WTC11 (cell line): ENCODE measurements at regions of chr2 and their contacts with region 1.

Region 1: GRCh38 chr2:84022810-84023431 is 436.2 kb downstream of the SUCLG1 start:
- DNase-seq: peak; percentile 22
- ATAC-seq: peak; percentile 77
- H3K4me3 Mint-ChIP-seq: no peak overlapping the region
- H3K27ac Mint-ChIP-seq: no peak overlapping the region
- H3K4me1 Mint-ChIP-seq: no peaks in the 10 kb centered on the region
- H3K27me3 Mint-ChIP-seq: no peaks in the 10 kb centered on the region
- CTCF ChIP-seq: peak; percentile 61; the same call in 1 of the 2 replicates

Region 2: GRCh38 chr2:84257831-84258230 is 234.9 kb after region 1 on chr2:
- CTCF ChIA-PET with region 1: interaction called, 15 read pairs
- POLR2A ChIA-PET with region 1: no interaction called
- DNase-seq: no peak
- ATAC-seq: peak; percentile 60; the same call in 1 of the 2 replicates
- H3K4me3 Mint-ChIP-seq: no peak overlapping the region
- H3K27ac Mint-ChIP-seq: no peak overlapping the region
- H3K4me1 Mint-ChIP-seq: no peaks in the 10 kb centered on the region
- H3K27me3 Mint-ChIP-seq: no peaks in the 10 kb centered on the region
- CTCF ChIP-seq: no peak

Region 3: GRCh38 chr2:84302513-84303412 is 279.8 kb after region 1 on chr2:
- CTCF ChIA-PET with region 1: interaction called, 17 read pairs
- POLR2A ChIA-PET with region 1: no interaction called
- DNase-seq: peak; percentile 55
- ATAC-seq: peak; percentile 90
- H3K4me3 Mint-ChIP-seq: no peak overlapping the region
- H3K27ac Mint-ChIP-seq: no peak overlapping the region
- H3K4me1 Mint-ChIP-seq: peaks cover 28% of the 10 kb centered on the region
- H3K27me3 Mint-ChIP-seq: peaks cover 5% of the 10 kb centered on the region
- CTCF ChIP-seq: peak; percentile 65

Region 4: DNA sequence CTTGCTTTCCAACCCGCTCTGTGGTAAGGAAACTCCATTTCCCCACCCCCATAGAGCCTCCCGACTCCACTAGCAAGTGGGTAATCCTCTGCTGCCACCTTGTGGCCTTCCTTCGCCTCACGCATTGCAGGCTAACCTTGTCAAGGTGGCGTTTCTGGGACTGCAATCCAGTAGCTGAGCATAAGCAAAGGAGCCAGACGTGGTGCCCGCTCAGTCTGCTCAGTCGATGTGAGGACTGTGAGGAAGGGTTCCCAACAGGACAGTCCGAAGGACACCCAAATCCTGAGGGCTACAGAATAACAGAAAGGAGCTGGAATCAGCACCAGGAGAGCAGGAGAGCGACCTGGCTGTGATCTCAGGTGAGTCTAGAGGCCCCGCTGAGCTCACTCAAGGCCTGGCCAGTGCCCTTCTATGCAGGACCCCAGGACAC is 292.0 kb after region 1 on chr2:
- CTCF ChIA-PET with region 1: interaction called, 18 read pairs
- POLR2A ChIA-PET with region 1: no interaction called
- DNase-seq: peak; percentile 95
- ATAC-seq: peak; percentile 92
- H3K4me3 Mint-ChIP-seq: no peak overlapping the region
- H3K27ac Mint-ChIP-seq: no peak overlapping the region
- H3K4me1 Mint-ChIP-seq: peaks cover 35% of the 10 kb centered on the region
- H3K27me3 Mint-ChIP-seq: no peaks in the 10 kb centered on the region
- CTCF ChIP-seq: peak; percentile 81